HCT116 (cell line): ENCODE measurements at regions of chr21 and their contacts with region 1.

Region 1: GRCh38 chr21:25801217-25802014 is 66.6 kb downstream of the GABPA start:
- DNase-seq: peak; percentile 89
- ATAC-seq: peak; percentile 99
- H3K4me3 ChIP-seq: no peak overlapping the region; a peak in 1 of 4 replicates
- H3K27ac ChIP-seq: no peak overlapping the region
- H3K4me1 ChIP-seq: no peaks in the 10 kb centered on the region
- H3K27me3 ChIP-seq: no peaks in the 10 kb centered on the region
- CTCF ChIP-seq: peak; percentile 98 to 100 (median 100)
- POLR2A ChIP-seq: no peak
- RAD21 ChIP-seq: peak; percentile 53; the same call in 1 of the 2 replicates

Region 2: DNA sequence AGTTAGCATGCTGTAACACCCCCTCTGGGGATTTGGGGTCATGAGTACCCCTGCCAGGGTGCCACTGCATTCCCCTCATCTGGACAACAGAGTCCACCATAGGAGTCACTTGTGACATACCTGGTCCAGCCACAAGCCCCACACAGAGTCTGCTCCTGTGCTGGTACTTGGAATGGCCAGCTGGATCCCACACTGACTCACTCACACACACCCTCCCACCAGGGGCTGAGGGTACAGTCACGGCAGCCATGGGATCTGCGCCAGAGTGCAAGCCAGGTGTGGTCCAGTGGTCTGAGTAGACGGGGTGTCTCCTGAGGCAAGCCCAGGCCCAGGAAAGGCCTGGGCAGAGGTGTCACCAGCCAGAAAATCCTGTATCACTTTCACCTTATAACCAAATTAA is 261.8 kb before region 1 on chr21:
- CTCF ChIA-PET with region 1: no interaction called
- POLR2A ChIA-PET with region 1: no interaction called
- RAD21 ChIA-PET with region 1: no interaction called
- intact Hi-C with region 1: no loop called
- DNase-seq: no peak
- ATAC-seq: no peak
- H3K4me3 ChIP-seq: no peak overlapping the region
- H3K27ac ChIP-seq: no peak overlapping the region
- H3K4me1 ChIP-seq: no peaks in the 10 kb centered on the region
- H3K27me3 ChIP-seq: no peaks in the 10 kb centered on the region
- CTCF ChIP-seq: no peak
- POLR2A ChIP-seq: no peak
- RAD21 ChIP-seq: no peak

Region 3: GRCh38 chr21:25734904-25735645 is 66.3 kb before region 1 on chr21 and contains the starts of genes ATP5PF and GABPA:
- CTCF ChIA-PET with region 1: no interaction called
- POLR2A ChIA-PET with region 1: no interaction called
- RAD21 ChIA-PET with region 1: no interaction called
- intact Hi-C with region 1: loop called (anchors 2 kb)
- DNase-seq: peak; percentile 97
- ATAC-seq: peak; percentile 90
- H3K4me3 ChIP-seq: peak within 1 kb of the TSS; percentile 82 to 96
- H3K27ac ChIP-seq: peak within 1 kb of the TSS; percentile 91
- H3K4me1 ChIP-seq: peaks cover 11 to 18% of the 10 kb centered on the region in 2 experiments
- H3K27me3 ChIP-seq: no peaks in the 10 kb centered on the region
- CTCF ChIP-seq: no peak
- POLR2A ChIP-seq: peak; percentile 43
- RAD21 ChIP-seq: no peak
- total RNA-seq, gene ATP5PF: 132 TPM
- total RNA-seq, gene GABPA: 23.6 TPM

Region 4: GRCh38 chr21:25790122-25790877 is 11.1 kb before region 1 on chr21:
- CTCF ChIA-PET with region 1: interaction called, 27 read pairs
- POLR2A ChIA-PET with region 1: no interaction called
- RAD21 ChIA-PET with region 1: no interaction called
- intact Hi-C with region 1: no loop called
- DNase-seq: peak; percentile 34
- ATAC-seq: peak; percentile 86
- H3K4me3 ChIP-seq: peak overlapping the region; percentile 1 to 33; a peak in 3 of 4 replicates
- H3K27ac ChIP-seq: no peak overlapping the region
- H3K4me1 ChIP-seq: peaks cover 0 to 12% of the 10 kb centered on the region in 2 experiments; a peak in 3 of 4 replicates
- H3K27me3 ChIP-seq: no peaks in the 10 kb centered on the region
- CTCF ChIP-seq: peak; percentile 31 to 64 (median 49); a peak in 5 of 6 replicates
- POLR2A ChIP-seq: no peak
- RAD21 ChIP-seq: peak; percentile 33; the same call in 1 of the 2 replicates